KBM-7 (cell line): ENCODE measurements at regions of chr9 and their contacts with region 1.

Region 1: DNA sequence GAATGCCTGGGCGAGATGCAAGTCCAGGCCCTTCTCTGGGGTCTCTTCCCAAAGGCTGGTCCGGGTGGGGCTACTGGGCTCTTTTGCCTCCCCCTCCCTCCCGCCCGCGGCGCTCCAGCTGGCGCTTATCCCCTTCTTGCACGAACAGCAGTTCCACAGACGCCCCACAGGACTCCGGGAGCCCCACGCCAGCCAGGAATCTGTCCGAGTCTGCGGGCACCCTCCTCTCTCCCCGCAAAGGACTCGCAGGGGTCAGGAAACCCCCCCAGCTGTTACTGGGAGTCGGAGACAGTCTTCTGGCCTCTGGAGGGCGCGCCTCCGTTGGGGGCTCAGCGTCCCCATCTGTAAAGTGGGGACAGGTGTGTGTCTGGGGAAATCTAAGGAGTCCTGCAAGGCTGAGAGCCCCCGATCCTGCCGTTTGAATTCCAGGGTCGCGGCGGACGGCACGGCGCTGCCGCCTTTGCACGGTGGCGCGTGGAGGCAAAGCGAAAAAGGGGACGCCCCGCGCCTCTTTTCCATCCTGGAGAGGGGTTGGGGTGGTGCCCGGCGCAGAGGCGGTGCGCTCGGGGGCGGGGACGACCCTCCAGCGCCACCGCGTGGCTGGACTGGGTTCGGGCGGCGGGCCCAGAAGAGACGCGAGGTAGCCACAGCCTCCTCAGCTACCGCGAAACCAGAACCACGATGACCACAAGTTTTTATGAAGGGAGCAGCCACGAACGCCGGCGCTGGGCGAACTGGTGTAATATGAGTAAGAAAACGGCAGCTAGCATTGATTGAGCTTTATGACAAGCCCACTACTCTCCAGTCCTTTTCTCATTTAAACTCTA is 2.9 kb upstream of the CCIN start:
- DNase-seq: peak; percentile 91

Region 2: GRCh38 chr9:35579130-35579529 is 587.2 kb before region 1 on chr9:
- in situ Hi-C with region 1: no loop called
- DNase-seq: no peak

Region 3: GRCh38 chr9:36110434-36110833 is 55.9 kb before region 1 on chr9:
- in situ Hi-C with region 1: loop called (anchors 10 kb)
- DNase-seq: no peak